Mammary epithelial cell (primary cell): ENCODE measurements at regions of chr22 and their contacts with region 1.

Region 1: DNA sequence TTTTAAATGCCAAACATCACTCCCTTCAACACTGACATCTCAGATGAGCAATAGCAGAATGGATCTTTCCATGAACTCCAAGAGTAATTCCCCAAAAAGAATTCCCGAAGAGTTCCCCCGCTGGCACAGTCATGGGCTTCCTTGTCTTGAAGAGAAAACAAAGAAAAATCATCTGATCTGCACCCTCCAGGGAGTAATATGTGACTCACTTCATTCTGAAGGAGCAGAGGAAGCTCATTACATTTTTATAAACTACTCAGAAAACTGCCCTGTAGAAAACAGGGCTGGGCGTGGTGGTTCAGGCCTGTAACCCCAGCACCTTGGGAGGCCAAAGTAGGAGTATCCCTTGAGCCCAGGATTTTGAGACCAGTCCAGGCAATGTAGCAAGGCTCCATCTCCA is 35.7 kb downstream of the CELSR1 start:
- DNase-seq: peak; percentile 83
- H3K4me3 ChIP-seq: no peak overlapping the region
- H3K27ac ChIP-seq: peak overlapping the region; percentile 33
- H3K4me1 ChIP-seq: peaks cover 40% of the 10 kb centered on the region
- H3K27me3 ChIP-seq: no peaks in the 10 kb centered on the region
- CTCF ChIP-seq: no peak

Region 2: GRCh38 chr22:46457524-46458488 is 43.9 kb before region 1 on chr22:
- CTCF ChIA-PET with region 1: no interaction called
- dilution Hi-C with region 1: no loop called
- in situ Hi-C with region 1: no loop called
- intact Hi-C with region 1: loop called (anchors 2 kb)
- DNase-seq: peak; percentile 93
- H3K4me3 ChIP-seq: no peak overlapping the region
- H3K27ac ChIP-seq: no peak overlapping the region
- H3K4me1 ChIP-seq: peaks cover 47% of the 10 kb centered on the region
- H3K27me3 ChIP-seq: no peaks in the 10 kb centered on the region
- CTCF ChIP-seq: no peak

Region 3: GRCh38 chr22:46829941-46830715 is 328.4 kb after region 1 on chr22:
- CTCF ChIA-PET with region 1: no interaction called
- dilution Hi-C with region 1: no loop called
- in situ Hi-C with region 1: no loop called
- intact Hi-C with region 1: no loop called
- DNase-seq: peak; percentile 14
- H3K4me3 ChIP-seq: no peak overlapping the region
- H3K27ac ChIP-seq: no peak overlapping the region
- H3K4me1 ChIP-seq: peaks cover 17% of the 10 kb centered on the region
- H3K27me3 ChIP-seq: no peaks in the 10 kb centered on the region
- CTCF ChIP-seq: no peak